ENCODE measurements at regions of chr11 and their contacts with region 1.

Region 1: GRCh38 chr11:12087075-12088004 is 23.1 kb upstream of the MICAL2 start:
- DNase-seq: peak in 1 of 2 experiments; percentile 81
- ATAC-seq: peak; percentile 65 to 72
- H3K4me3 ChIP-seq: peak overlapping the region; percentile 24; the same call in 1 of the 3 replicates
- H3K27ac ChIP-seq: peak overlapping the region; percentile 96 to 97
- H3K4me1 ChIP-seq: peaks cover 71% of the 10 kb centered on the region
- CTCF ChIP-seq: no peak
- EP300 ChIP-seq: no peak
- POLR2A ChIP-seq: no peak
- RAD21 ChIP-seq: no peak; a peak in 1 of 5 replicates

Region 2: GRCh38 chr11:12052676-12053605 is 34.4 kb before region 1 on chr11:
- CTCF ChIA-PET with region 1: interaction called, 25 read pairs
- POLR2A ChIA-PET with region 1: interaction called, 3 read pairs
- DNase-seq: peak in 1 of 2 experiments; percentile 57
- ATAC-seq: peak in 1 of 2 experiments; percentile 48; a peak in 3 of 6 replicates
- H3K4me3 ChIP-seq: no peak overlapping the region
- H3K27ac ChIP-seq: peak overlapping the region; percentile 77 to 83
- H3K4me1 ChIP-seq: peaks cover 46% of the 10 kb centered on the region
- CTCF ChIP-seq: no peak
- EP300 ChIP-seq: no peak
- POLR2A ChIP-seq: no peak
- RAD21 ChIP-seq: peak; percentile 33 to 48; a peak in 4 of 5 replicates

Region 3: DNA sequence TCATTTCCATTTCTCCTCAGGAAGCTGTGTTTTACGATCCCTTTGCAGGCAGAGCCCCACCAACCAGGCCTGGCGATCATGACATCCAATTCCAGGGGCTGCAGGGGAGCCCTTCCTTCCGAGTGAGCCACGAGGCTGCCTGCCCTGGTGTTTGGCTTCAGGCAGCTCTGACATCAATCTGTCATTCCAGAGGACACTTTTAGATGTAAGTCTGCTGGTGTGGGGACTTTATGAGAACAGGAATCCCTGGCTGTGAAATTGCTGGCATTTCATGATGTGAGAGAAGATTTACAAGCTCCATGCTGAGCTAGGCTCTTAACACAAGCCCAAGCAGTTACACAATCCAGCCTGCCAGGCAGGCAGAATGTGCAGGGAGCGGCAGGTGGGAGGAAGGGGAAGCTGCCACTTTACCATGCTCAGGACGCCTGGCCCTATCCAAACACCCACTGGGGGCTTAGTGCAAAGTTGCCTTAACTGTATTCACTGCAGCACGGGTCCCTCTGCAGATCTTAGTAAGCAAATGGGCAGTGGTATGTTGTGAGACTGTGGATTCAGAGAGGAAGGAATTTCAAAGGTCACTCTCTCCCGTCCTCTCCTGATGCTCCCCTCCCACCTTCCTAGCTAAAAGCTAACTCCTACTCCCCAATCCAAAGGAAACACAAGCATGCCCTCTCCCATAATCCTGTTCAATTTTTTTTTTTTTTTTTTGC is 20.4 kb before region 1 on chr11:
- CTCF ChIA-PET with region 1: interaction called, 31 read pairs
- POLR2A ChIA-PET with region 1: interaction called, 56 read pairs
- DNase-seq: peak in 1 of 2 experiments; percentile 93
- ATAC-seq: peak; percentile 83 to 84
- H3K4me3 ChIP-seq: peak overlapping the region; percentile 8; the same call in 1 of the 3 replicates
- H3K27ac ChIP-seq: peak overlapping the region; percentile 97
- H3K4me1 ChIP-seq: peaks cover 66% of the 10 kb centered on the region
- CTCF ChIP-seq: no peak
- EP300 ChIP-seq: peak; percentile 51 to 79; a peak in 3 of 5 replicates
- POLR2A ChIP-seq: no peak
- RAD21 ChIP-seq: no peak

Region 4: GRCh38 chr11:12100841-12101242 is 13.5 kb after region 1 on chr11:
- CTCF ChIA-PET with region 1: interaction called, 92 read pairs
- POLR2A ChIA-PET with region 1: interaction called, 3 read pairs
- DNase-seq: no peak
- ATAC-seq: no peak
- H3K4me3 ChIP-seq: no peak overlapping the region
- H3K27ac ChIP-seq: peak overlapping the region in 1 of 2 experiments; percentile 51; a peak in 2 of 6 replicates
- H3K4me1 ChIP-seq: peaks cover 12% of the 10 kb centered on the region
- CTCF ChIP-seq: no peak
- EP300 ChIP-seq: no peak
- POLR2A ChIP-seq: no peak
- RAD21 ChIP-seq: no peak

Region 5: DNA sequence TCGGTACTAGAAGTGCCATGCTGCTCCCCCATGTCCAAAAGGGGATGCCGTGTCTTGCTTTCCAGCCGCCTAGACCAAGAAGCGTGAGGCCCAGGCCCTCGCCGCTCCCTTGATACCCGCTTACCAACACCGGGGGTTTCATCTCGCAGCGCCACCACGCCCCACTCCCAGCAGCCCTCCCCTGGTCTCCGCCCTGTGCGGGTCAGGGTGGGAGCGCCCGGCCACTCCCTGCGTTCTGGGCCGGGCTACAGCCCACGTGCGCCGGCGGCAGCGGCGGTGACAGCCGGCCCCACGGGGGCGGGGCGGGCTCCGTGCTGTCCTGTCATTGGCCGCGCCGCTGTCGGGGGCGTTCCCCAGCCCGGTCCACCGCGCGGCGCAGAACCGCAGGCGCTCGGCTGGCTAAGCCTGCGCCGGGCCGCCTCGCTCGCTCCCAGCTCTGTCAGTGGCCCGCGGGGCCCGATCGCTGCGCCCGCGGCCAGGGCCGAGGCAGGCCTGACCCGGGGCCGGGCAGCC is 22.9 kb after region 1 on chr11 and contains the start of gene MICAL2:
- CTCF ChIA-PET with region 1: interaction called, 92 read pairs
- POLR2A ChIA-PET with region 1: interaction called, 16 read pairs
- DNase-seq: peak; percentile 85 to 96
- ATAC-seq: peak; percentile 95 to 97
- H3K4me3 ChIP-seq: peak within 1 kb of the TSS; percentile 83
- H3K27ac ChIP-seq: peak within 1 kb of the TSS; percentile 83 to 92
- H3K4me1 ChIP-seq: peaks cover 23% of the 10 kb centered on the region
- CTCF ChIP-seq: no peak
- EP300 ChIP-seq: no peak
- POLR2A ChIP-seq: peak; percentile 18
- RAD21 ChIP-seq: peak; percentile 5 to 13; a peak in 2 of 5 replicates
- polyA plus RNA-seq, gene MICAL2: 42.1 and 52.4 TPM in 2 replicates

Region 6: DNA sequence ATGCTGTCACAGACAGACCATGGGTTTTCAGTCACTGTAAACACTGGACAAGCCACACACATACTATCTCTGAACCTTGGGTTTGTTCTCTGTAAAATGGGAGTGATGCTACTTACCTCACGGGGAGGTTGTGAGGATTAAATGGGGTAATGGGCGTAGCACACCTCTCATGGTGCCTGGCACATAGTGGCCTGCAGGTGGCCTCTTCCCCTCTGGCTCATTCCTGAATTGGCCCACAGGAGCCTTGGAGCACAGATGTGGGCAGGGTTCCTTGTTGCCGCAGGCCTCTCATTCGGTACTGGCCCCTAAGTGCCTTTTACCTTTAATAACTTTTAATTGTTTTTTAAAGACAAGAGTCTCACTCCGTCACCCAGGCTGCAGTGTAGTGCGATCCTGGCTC is 34.7 kb after region 1 on chr11:
- CTCF ChIA-PET with region 1: interaction called, 11 read pairs
- POLR2A ChIA-PET with region 1: no interaction called
- DNase-seq: peak; percentile 48 to 50
- ATAC-seq: peak; percentile 58 to 83; a peak in 4 of 6 replicates
- H3K4me3 ChIP-seq: no peak overlapping the region
- H3K27ac ChIP-seq: peak overlapping the region in 1 of 2 experiments; percentile 51; a peak in 3 of 6 replicates
- H3K4me1 ChIP-seq: peaks cover 74% of the 10 kb centered on the region
- CTCF ChIP-seq: peak; percentile 35
- EP300 ChIP-seq: no peak
- POLR2A ChIP-seq: no peak
- RAD21 ChIP-seq: peak in 1 of 2 experiments; percentile 54; a peak in 2 of 5 replicates

Measured in A549 (cell line).